Vagina (tissue), 2 donors: ENCODE measurements at regions of chr3 and their contacts with region 1.

Region 1: DNA sequence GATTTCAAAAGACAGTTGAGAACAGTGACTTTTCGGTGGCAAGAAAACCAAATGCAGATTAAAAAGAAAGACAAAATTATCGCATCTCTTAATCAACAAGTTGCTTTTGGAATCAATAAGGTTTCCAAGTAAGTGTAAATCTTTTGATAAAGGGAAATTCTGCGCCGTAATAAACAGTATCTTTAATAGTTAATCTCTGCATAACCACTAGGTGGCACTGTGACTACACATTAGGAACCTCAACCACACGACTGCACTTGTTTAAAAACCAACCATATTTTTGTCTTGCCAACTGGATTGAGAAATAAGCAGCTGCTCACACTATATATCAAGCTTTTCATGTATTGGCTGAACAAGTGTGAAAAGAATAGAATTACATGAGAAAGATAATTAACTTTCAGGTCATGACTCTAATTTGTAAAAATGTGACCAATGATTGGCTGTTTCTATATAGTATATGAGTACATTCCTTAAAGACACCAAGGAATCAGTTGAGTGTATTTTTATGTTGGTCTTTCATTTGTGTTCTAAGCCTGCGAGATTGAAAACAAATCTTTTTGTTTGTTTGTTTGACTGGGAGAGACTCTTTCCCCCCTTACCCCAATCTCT is 72.7 kb downstream of the DZIP3 start:
- DNase-seq: no peak
- H3K4me3 ChIP-seq: no peak overlapping the region
- H3K27ac ChIP-seq: no peak overlapping the region
- H3K4me1 ChIP-seq: no peaks in the 10 kb centered on the region
- H3K27me3 ChIP-seq: no peaks in the 10 kb centered on the region
- CTCF ChIP-seq: peak; percentile 26 to 71 (median 48)
- POLR2A ChIP-seq: no peak

Region 2: GRCh38 chr3:107264888-107265287 is 1397.3 kb before region 1 on chr3:
- intact Hi-C with region 1: no loop called
- DNase-seq: no peak
- H3K4me3 ChIP-seq: no peak overlapping the region
- H3K27ac ChIP-seq: no peak overlapping the region
- H3K4me1 ChIP-seq: no peaks in the 10 kb centered on the region
- H3K27me3 ChIP-seq: no peaks in the 10 kb centered on the region
- CTCF ChIP-seq: no peak
- POLR2A ChIP-seq: no peak

Region 3: GRCh38 chr3:108887121-108887520 is 224.9 kb after region 1 on chr3:
- intact Hi-C with region 1: no loop called
- DNase-seq: no peak
- H3K4me3 ChIP-seq: no peak overlapping the region
- H3K27ac ChIP-seq: no peak overlapping the region
- H3K4me1 ChIP-seq: no peaks in the 10 kb centered on the region
- H3K27me3 ChIP-seq: no peaks in the 10 kb centered on the region
- CTCF ChIP-seq: no peak
- POLR2A ChIP-seq: no peak

Region 4: DNA sequence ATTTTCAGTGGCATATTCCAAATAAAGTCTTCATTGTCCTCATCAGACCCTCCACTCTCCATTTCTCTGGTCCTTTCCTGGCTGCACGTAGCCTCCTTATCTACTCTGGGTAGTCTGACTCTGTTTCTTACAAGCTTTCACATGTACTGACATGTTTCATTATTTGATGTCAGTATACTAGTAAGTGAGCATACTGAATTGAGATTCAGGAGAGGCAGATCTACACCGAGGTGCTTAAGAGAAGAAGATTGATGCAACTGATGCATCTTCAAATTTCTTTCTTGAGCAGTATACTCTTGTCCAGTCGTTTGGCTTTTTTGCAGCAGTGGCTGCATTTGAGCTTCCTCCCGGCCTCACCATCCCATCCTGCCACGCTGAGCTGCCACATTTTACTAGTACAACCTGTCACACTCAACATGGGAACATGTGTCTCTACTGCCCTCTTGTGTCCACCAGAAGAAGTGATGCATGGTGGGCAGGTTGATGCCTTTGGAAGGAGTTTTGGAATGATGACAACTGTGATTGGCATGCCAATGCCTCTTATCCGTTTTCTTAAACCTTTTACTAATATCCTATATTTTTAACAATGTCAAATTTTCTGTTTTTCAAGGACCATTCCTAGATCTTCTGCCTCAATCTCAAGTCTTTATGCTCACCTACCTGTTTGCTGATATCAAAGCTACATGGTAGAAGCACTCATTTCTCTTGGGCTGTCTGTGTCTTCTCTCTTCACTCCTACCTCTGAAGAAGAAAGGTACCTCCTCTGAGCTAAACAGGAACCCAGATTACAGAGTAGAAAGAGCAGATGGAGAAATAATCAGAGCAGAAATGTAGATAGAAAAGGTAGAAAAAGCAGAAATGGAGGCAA is 252.8 kb after region 1 on chr3:
- intact Hi-C with region 1: loop called (anchors 10 kb)
- DNase-seq: no peak
- H3K4me3 ChIP-seq: no peak overlapping the region
- H3K27ac ChIP-seq: no peak overlapping the region
- H3K4me1 ChIP-seq: no peaks in the 10 kb centered on the region
- H3K27me3 ChIP-seq: no peaks in the 10 kb centered on the region
- CTCF ChIP-seq: peak in 2 of 3 experiments; percentile 8 to 40
- POLR2A ChIP-seq: no peak

Region 5: GRCh38 chr3:109831403-109831802 is 1169.2 kb after region 1 on chr3:
- intact Hi-C with region 1: no loop called
- DNase-seq: no peak
- H3K4me3 ChIP-seq: no peak overlapping the region
- H3K27ac ChIP-seq: no peak overlapping the region
- H3K4me1 ChIP-seq: no peaks in the 10 kb centered on the region
- H3K27me3 ChIP-seq: no peaks in the 10 kb centered on the region
- CTCF ChIP-seq: no peak
- POLR2A ChIP-seq: no peak